Dorsolateral prefrontal cortex (tissue), 120 donors: ENCODE measurements at regions of chr17 and their contacts with region 1.

Region 1: DNA sequence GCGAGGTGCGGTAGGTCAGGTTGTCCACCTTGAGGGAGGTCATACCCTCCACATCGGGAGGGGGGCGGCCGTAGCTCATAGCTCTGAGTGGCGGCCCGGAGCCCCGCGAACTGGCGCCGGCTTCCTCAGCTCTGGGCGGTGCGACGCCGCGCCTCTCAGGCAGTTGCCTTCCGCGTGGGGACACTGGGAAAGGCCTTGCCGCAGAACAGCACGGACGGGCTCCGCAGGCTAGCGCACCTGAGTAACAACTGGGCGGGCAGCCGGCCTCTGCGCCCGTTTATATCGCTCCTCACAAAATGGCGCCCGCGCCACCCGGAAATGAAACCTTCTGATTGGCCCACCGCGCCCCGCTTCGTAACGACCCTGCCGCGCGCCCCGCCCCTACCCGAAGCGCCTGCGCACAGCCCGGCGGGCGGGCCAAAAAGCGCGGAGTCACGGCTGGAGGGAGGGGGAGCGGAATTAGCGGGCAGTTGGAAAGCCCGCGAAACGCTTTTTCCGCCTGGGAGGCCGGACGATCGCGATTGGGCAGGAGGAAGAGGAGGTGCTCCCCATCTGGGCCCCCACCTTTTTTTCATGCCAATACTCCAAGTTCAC is at the start of gene SRSF2:
- DNase-seq: peak; percentile 96 to 99 (median 98)
- H3K4me3 ChIP-seq: peak within 1 kb of the TSS; percentile 66 to 100 (median 98)
- H3K27ac ChIP-seq: peak within 1 kb of the TSS; percentile 89 to 100 (median 100)
- H3K27me3 ChIP-seq: no peaks in the 10 kb centered on the region
- CTCF ChIP-seq: peak in 1 of 56 donors; percentile 4
- total RNA-seq, gene SRSF2: 73.8 to 169 (median 128) TPM

Region 2: DNA sequence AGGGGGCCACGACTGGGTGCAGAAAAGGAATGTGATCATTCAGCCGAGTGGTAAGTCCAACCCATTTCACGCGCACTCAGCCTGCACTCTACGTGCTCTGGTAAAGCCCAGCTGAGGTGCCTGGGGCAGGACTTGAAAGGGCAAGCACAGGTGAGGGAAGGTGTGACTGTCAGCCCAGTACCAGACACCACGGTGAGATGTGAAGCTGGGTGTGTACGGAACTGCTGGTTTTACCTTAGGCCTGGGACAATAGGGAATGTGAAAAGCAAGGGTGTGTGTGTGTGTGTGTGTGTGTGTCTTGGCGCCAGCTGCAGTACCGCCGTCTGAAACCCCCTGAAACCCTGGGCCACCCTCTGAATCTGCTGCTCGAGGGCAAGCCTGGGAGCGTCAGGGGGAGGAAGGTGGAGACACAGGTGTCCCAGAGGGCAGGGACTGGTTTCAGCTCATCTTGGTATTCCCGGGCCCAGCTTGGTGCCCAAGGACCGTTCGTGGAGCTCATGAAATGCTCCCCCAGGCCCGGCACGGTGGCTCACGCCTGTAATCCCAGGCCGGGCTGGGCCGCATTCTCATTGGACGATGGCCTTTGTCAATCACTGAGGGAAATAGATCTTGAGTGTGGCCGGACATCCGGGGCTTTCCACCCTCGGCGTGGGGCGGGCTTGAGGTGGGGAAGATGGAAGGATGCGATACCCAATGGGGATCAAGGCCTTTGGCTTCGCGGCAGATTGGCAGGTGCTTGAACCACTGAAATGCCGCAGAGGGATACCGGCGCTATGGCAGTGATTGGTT is 65.9 kb before region 1 on chr17:
- intact Hi-C with region 1: loop called in 1 of 2 experiments (anchors 2 kb)
- DNase-seq: peak; percentile 100
- H3K4me3 ChIP-seq: peak overlapping the region; percentile 34 to 96 (median 75)
- H3K27ac ChIP-seq: peak overlapping the region; percentile 16 to 97 (median 90)
- H3K27me3 ChIP-seq: no peaks in the 10 kb centered on the region
- CTCF ChIP-seq: peak in 10 of 56 donors; percentile 3 to 34 (median 14)

Region 3: GRCh38 chr17:76726231-76726775 is 10.9 kb before region 1 on chr17 and contains the start of gene JMJD6:
- intact Hi-C with region 1: loop called (anchors 1 kb)
- DNase-seq: peak in 9 of 10 donors; percentile 94 to 98 (median 97)
- H3K4me3 ChIP-seq: peak within 1 kb of the TSS; percentile 71 to 100 (median 98)
- H3K27ac ChIP-seq: peak within 1 kb of the TSS; percentile 91 to 100 (median 99)
- H3K27me3 ChIP-seq: no peaks in the 10 kb centered on the region
- CTCF ChIP-seq: peak in 1 of 56 donors; percentile 1
- total RNA-seq, gene JMJD6: 22.0 to 110 (median 35.8) TPM